Right cardiac atrium (tissue), 5 donors: ENCODE measurements at regions of chr20 and their contacts with region 1.

Region 1: GRCh38 chr20:50189681-50190582 is 698 bp upstream of the CEBPB start:
- DNase-seq: peak; percentile 90 to 97 (median 97)
- ATAC-seq: peak; percentile 70 to 83
- H3K4me3 ChIP-seq: peak overlapping the region; percentile 64
- H3K27ac ChIP-seq: peak overlapping the region; percentile 25
- H3K4me1 ChIP-seq: peaks cover 8% of the 10 kb centered on the region
- H3K27me3 ChIP-seq: no peaks in the 10 kb centered on the region

Region 2: DNA sequence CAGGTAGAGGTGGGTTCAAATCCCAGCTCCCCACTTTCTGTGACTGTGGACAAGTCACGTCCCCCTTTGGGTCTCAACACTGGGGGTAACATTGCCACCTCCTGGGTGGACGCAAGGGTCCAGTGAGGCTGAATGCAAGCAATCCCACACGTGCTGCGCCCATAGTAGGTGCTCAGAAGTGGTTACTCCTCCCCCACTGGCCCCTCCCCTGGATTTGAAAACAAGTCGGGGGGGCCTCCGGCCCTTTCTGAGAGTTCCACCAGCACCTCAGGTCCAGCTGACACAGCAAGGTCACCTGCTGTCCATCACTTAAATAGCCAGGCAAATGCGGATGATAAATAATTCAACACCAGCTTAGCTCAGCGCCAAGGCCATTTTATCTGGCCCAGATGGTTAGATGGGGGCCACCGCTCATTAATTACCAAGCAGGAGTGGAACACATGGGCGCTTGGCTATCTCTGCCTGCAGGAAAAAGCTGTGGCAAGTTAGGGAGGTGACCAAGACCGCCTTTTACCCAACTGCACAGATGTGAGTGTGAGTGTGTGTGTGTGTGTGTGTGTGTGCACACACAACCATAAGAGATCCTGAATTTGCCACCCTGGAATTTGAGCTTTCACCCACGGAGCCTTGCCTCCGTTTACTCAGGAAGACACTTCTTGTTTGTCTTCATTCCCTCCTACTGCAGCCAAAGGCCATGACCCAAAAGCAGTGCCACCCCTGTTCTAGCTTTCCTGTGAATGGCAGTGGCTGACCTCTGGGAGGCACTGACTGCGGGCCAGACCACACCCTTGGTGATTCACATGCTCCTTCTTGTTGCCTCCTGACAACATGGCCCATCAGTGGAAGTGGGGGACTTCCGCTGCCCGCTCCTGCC is 672.8 kb before region 1 on chr20:
- intact Hi-C with region 1: no loop called
- DNase-seq: peak in 1 of 3 donors; percentile 64
- ATAC-seq: peak; percentile 27 to 74
- H3K4me3 ChIP-seq: no peak overlapping the region
- H3K27ac ChIP-seq: no peak overlapping the region
- H3K4me1 ChIP-seq: no peaks in the 10 kb centered on the region
- H3K27me3 ChIP-seq: no peaks in the 10 kb centered on the region

Region 3: GRCh38 chr20:49549811-49550551 is 640.0 kb before region 1 on chr20:
- intact Hi-C with region 1: no loop called
- DNase-seq: no peak
- ATAC-seq: no peak
- H3K4me3 ChIP-seq: no peak overlapping the region
- H3K27ac ChIP-seq: no peak overlapping the region
- H3K4me1 ChIP-seq: no peaks in the 10 kb centered on the region
- H3K27me3 ChIP-seq: no peaks in the 10 kb centered on the region

Region 4: GRCh38 chr20:50034567-50035208 is 155.2 kb before region 1 on chr20:
- intact Hi-C with region 1: no loop called
- DNase-seq: peak in 2 of 3 donors; percentile 54 to 67
- ATAC-seq: peak in 1 of 2 donors; percentile 33
- H3K4me3 ChIP-seq: no peak overlapping the region
- H3K27ac ChIP-seq: no peak overlapping the region
- H3K4me1 ChIP-seq: peaks cover 4% of the 10 kb centered on the region
- H3K27me3 ChIP-seq: no peaks in the 10 kb centered on the region

Region 5: DNA sequence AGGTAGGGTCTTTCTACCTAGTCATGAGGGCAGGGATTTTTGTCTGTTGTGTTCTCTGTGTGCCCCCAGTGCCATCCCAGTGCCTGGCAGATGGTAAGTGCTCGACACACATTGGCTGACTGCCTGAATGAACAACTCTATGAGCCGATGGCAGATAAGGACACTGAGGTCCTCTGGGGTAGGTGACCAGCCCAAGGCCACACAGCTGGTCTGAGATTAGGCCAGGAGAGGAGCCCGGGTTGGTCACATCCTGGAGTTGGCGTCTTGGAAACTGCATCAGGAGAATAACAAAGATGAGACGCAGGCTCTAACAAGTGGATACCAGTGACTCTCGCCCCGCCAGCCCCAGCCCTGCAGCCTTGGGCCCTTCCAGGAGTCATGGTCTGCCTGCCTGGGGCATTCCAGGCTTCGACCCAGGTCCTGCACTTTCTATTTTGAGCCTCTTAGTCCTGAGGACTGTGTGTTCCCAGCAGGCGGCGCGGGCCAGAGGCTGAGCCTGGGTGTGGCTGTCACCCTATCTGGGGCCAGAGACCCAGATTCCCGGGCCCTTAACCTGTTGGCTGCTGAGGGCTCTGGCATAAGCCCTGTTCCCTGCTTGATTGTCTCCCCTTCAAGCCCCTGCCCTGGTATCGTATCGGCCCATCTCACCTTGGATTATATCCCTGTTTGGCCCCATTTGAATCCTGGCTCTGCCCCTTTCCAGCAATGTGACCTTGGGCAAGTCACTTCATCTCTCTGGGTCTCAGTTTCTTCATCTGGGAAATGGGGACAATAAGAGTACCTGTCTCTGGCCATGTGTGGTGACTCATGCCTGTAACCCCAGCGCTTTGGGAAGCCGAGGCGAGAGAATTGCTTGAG is 89.0 kb after region 1 on chr20:
- intact Hi-C with region 1: loop called in 3 of 4 experiments (anchors 5 to 10 kb)
- DNase-seq: peak; percentile 86 to 94 (median 93)
- ATAC-seq: peak; percentile 76 to 80
- H3K4me3 ChIP-seq: no peak overlapping the region
- H3K27ac ChIP-seq: peak overlapping the region; percentile 78
- H3K4me1 ChIP-seq: peaks cover 6% of the 10 kb centered on the region
- H3K27me3 ChIP-seq: no peaks in the 10 kb centered on the region

Region 6: GRCh38 chr20:50379049-50379990 is 189.4 kb after region 1 on chr20:
- intact Hi-C with region 1: loop called in 2 of 4 experiments (anchors 5 kb)
- DNase-seq: peak; percentile 96 to 97 (median 96)
- ATAC-seq: peak; percentile 85 to 90
- H3K4me3 ChIP-seq: peak overlapping the region; percentile 25
- H3K27ac ChIP-seq: peak overlapping the region; percentile 95
- H3K4me1 ChIP-seq: peaks cover 19% of the 10 kb centered on the region
- H3K27me3 ChIP-seq: no peaks in the 10 kb centered on the region

Region 7: GRCh38 chr20:50460460-50461267 is 270.7 kb after region 1 on chr20:
- intact Hi-C with region 1: loop called (anchors 2 kb)
- DNase-seq: peak; percentile 89 to 97 (median 94)
- ATAC-seq: peak; percentile 87
- H3K4me3 ChIP-seq: no peak overlapping the region
- H3K27ac ChIP-seq: no peak overlapping the region
- H3K4me1 ChIP-seq: peaks cover 4% of the 10 kb centered on the region
- H3K27me3 ChIP-seq: no peaks in the 10 kb centered on the region

Region 8: GRCh38 chr20:50575847-50576720 is 386.2 kb after region 1 on chr20:
- intact Hi-C with region 1: loop called (anchors 5 kb)
- DNase-seq: peak; percentile 66 to 91 (median 87)
- ATAC-seq: peak; percentile 58 to 63
- H3K4me3 ChIP-seq: no peak overlapping the region
- H3K27ac ChIP-seq: no peak overlapping the region
- H3K4me1 ChIP-seq: peaks cover 14% of the 10 kb centered on the region
- H3K27me3 ChIP-seq: no peaks in the 10 kb centered on the region